Activated CD8-positive, alpha-beta T cell treated with anti-CD3 and anti-CD28 coated beads for 36 hours (primary cell): ENCODE measurements at regions of chr2 and their contacts with region 1.

Region 1: GRCh38 chr2:26330113-26330549 is 15.8 kb upstream of the SELENOI start:
- DNase-seq: peak; percentile 96
- ATAC-seq: peak; percentile 98
- H3K4me3 Mint-ChIP-seq: no peak overlapping the region
- H3K27ac Mint-ChIP-seq: no peak overlapping the region
- H3K4me1 Mint-ChIP-seq: peaks cover 21% of the 10 kb centered on the region
- H3K27me3 Mint-ChIP-seq: no peaks in the 10 kb centered on the region
- CTCF ChIP-seq: peak; percentile 88

Region 2: DNA sequence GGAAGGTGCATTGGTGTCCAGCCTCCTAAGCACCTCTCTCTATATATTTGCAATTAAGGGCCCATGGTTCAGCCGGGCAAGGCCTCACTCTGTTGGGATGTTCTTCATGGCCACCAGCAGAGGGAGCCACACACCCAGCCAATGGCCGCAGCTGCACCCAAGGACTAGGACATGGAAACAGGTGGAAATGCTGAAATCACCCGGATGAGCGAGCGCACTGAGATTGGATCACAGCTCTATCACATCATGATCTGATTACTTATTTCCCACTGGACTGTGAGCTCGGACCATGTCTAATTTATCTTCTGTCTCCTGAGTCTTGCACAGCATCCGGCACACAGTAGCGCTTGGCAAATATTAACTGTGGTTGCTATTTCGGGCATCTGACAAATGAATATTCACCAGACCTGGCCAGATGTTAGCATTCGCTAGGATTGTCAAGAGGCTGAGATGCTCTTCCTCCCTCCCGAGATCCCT is 379.0 kb before region 1 on chr2:
- CTCF ChIA-PET with region 1: interaction called, 3 read pairs
- POLR2A ChIA-PET with region 1: no interaction called
- intact Hi-C with region 1: loop called (anchors 2 kb)
- DNase-seq: peak; percentile 77
- ATAC-seq: peak; percentile 95
- H3K4me3 Mint-ChIP-seq: no peak overlapping the region
- H3K27ac Mint-ChIP-seq: no peak overlapping the region
- H3K4me1 Mint-ChIP-seq: no peaks in the 10 kb centered on the region
- H3K27me3 Mint-ChIP-seq: no peaks in the 10 kb centered on the region
- CTCF ChIP-seq: peak; percentile 87

Region 3: GRCh38 chr2:26244309-26245121 is 85.6 kb before region 1 on chr2 and contains the starts of genes HADHA and HADHB:
- CTCF ChIA-PET with region 1: interaction called, 10 read pairs
- POLR2A ChIA-PET with region 1: no interaction called
- intact Hi-C with region 1: loop called (anchors 10 kb)
- DNase-seq: peak; percentile 88
- ATAC-seq: peak; percentile 80
- H3K4me3 Mint-ChIP-seq: peak within 1 kb of the TSS; percentile 94
- H3K27ac Mint-ChIP-seq: peak within 1 kb of the TSS; percentile 100
- H3K4me1 Mint-ChIP-seq: peaks cover 52% of the 10 kb centered on the region
- H3K27me3 Mint-ChIP-seq: no peaks in the 10 kb centered on the region
- CTCF ChIP-seq: no peak
- total RNA-seq, gene HADHA: 118 to 120 TPM
- total RNA-seq, gene HADHB: 58.8 TPM

Region 4: GRCh38 chr2:26316041-26316440 is 14.1 kb before region 1 on chr2:
- CTCF ChIA-PET with region 1: interaction called, 12 read pairs
- POLR2A ChIA-PET with region 1: no interaction called
- intact Hi-C with region 1: no loop called
- DNase-seq: peak; percentile 12
- ATAC-seq: peak; percentile 42
- H3K4me3 Mint-ChIP-seq: no peak overlapping the region
- H3K27ac Mint-ChIP-seq: no peak overlapping the region
- H3K4me1 Mint-ChIP-seq: no peaks in the 10 kb centered on the region
- H3K27me3 Mint-ChIP-seq: no peaks in the 10 kb centered on the region
- CTCF ChIP-seq: peak; percentile 23

Region 5: DNA sequence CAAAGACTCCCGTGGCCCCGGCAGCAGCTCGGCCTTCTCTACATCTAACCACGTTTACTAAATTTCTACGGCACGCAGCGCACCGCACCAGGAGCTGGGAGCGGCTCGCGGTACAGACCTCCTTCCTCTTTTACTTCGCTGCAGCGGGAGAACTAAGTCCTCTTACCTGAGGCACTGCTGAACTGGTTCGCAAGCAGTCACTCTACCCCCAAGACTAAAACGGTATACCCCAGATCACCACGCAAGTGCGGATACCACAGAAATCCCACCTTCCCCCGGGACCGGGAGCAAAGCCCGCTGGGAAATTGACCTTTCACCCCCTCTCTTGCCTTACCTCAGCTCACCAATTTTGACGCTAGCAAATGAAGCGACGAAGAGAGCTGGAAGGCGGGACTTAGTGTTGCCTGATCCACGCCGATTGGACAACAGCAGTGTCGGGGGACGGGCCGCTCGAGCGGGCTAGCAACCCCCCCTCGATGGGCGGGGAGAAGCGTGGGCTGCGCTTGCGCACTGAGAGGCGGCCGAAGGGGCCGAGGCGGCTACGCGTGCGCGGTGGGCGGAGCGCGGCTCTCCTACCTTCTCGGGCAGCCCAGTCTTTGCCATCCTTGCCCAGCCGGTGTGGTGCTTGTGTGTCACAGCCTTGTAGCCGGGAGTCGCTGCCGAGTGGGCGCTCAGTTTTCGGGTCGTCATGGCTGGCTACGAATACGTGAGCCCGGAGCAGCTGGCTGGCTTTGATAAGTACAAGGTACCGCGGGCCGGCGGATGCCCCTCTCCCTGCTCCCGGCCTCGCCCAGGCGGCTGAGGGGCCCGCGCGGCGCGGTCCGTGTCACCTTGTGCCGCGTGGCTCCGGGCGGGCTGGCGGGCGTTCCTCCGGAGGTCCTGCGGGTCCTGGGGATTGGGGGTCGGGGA is 15.7 kb after region 1 on chr2 and contains the start of gene SELENOI:
- CTCF ChIA-PET with region 1: interaction called, 12 read pairs
- POLR2A ChIA-PET with region 1: interaction called, 15 read pairs
- intact Hi-C with region 1: no loop called
- DNase-seq: peak; percentile 99
- ATAC-seq: peak; percentile 95
- H3K4me3 Mint-ChIP-seq: peak within 1 kb of the TSS; percentile 97
- H3K27ac Mint-ChIP-seq: peak within 1 kb of the TSS; percentile 98
- H3K4me1 Mint-ChIP-seq: peaks cover 31% of the 10 kb centered on the region
- H3K27me3 Mint-ChIP-seq: no peaks in the 10 kb centered on the region
- CTCF ChIP-seq: no peak
- total RNA-seq, gene SELENOI: 38.9 to 39.1 TPM

Region 6: DNA sequence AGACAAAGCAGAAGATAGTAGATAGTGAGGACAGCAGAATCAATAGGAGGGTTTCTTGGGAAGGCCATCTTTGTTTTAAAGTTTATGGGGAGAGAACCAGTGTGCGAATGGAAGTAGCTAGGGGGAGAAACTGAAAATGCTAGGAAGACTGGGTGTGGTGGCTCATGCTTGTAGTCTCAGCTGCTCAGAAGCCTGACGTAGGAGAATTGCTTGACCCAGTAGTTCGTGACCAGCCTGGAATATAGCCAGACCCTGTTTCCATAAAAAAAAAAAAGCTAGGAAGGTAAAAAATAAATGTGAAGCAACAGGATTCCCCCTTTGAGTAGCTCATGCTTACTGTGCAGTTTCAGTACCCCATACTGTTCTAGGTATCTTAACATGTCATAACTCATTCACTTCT is 52.4 kb after region 1 on chr2:
- CTCF ChIA-PET with region 1: no interaction called
- POLR2A ChIA-PET with region 1: no interaction called
- intact Hi-C with region 1: no loop called
- DNase-seq: no peak
- ATAC-seq: no peak
- H3K4me3 Mint-ChIP-seq: no peak overlapping the region
- H3K27ac Mint-ChIP-seq: no peak overlapping the region
- H3K4me1 Mint-ChIP-seq: peaks cover 2% of the 10 kb centered on the region
- H3K27me3 Mint-ChIP-seq: no peaks in the 10 kb centered on the region
- CTCF ChIP-seq: no peak